MCF 10A (cell line): ENCODE measurements at regions of chr4 and their contacts with region 1.

Region 1: DNA sequence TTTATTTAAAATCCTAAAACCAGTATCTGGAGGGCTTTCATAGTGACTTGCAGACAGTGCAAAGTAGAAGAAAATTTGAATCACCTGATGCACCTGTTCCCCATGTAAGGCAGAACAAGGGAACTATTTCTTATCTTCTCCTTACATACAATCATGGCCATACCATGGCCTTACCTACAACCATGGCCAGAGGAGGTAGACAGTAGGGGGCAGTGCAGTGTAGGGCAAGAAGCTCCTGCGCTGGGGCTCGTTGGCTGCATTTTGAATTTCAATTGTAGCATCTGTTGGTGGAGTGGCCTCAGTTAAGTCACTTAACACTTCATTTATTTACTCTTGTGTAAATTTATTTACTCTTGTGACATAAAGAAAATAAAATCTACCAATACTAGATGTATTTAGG is 33.0 kb downstream of the GALNTL6 start:
- DNase-seq: peak; percentile 60
- H3K4me3 Mint-ChIP-seq: no peak overlapping the region
- H3K27ac Mint-ChIP-seq: no peak overlapping the region
- H3K4me1 Mint-ChIP-seq: no peaks in the 10 kb centered on the region
- H3K27me3 Mint-ChIP-seq: peaks cover 66% of the 10 kb centered on the region
- CTCF ChIP-seq: peak; percentile 71

Region 2: GRCh38 chr4:171896426-171896825 is 50.2 kb after region 1 on chr4:
- CTCF ChIA-PET with region 1: no interaction called
- POLR2A ChIA-PET with region 1: no interaction called
- intact Hi-C with region 1: no loop called
- DNase-seq: no peak
- H3K4me3 Mint-ChIP-seq: no peak overlapping the region
- H3K27ac Mint-ChIP-seq: no peak overlapping the region
- H3K4me1 Mint-ChIP-seq: no peaks in the 10 kb centered on the region
- H3K27me3 Mint-ChIP-seq: peaks cover 2% of the 10 kb centered on the region
- CTCF ChIP-seq: no peak

Region 3: DNA sequence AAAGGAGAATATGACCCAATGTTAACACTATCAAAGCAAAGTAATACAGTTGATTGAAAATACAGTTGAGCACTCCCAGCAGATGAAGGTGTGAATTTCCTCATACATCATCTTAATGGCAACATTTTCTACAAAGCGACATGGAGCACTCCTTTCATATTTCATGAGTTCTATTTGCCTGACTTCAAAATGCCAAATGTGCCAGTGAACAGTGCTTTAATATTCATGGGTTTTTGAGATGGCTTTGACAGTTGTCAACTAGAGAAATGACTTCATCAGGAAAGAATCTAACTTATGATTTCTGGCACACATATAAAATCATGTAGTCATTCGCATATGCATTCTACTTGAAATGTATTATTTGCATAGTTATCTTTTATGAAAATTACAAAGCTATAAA is 189.3 kb after region 1 on chr4:
- CTCF ChIA-PET with region 1: no interaction called
- POLR2A ChIA-PET with region 1: no interaction called
- intact Hi-C with region 1: loop called (anchors 5 kb)
- DNase-seq: no peak
- H3K4me3 Mint-ChIP-seq: no peak overlapping the region
- H3K27ac Mint-ChIP-seq: no peak overlapping the region
- H3K4me1 Mint-ChIP-seq: no peaks in the 10 kb centered on the region
- H3K27me3 Mint-ChIP-seq: no peaks in the 10 kb centered on the region
- CTCF ChIP-seq: no peak

Region 4: DNA sequence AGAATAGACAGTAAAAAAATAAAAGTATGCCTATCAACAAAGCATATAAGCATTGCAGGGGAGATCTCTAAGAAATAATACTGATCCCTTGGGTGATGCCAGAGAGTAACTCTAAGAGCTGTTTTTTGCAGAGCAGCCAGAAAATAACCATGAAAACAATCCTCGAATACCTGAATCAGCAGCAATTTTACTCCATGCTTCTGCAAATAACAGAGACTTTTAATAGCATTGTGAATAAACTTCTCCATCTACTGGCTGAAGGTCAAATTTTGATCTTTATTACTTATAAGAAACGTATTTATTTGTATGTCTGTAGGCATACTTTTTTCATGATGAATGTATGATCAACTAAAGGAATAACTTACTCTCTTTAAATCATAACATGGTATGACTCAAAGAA is 301.5 kb after region 1 on chr4:
- CTCF ChIA-PET with region 1: interaction called, 5 read pairs
- POLR2A ChIA-PET with region 1: no interaction called
- intact Hi-C with region 1: loop called (anchors 1 kb)
- DNase-seq: no peak
- H3K4me3 Mint-ChIP-seq: no peak overlapping the region
- H3K27ac Mint-ChIP-seq: no peak overlapping the region
- H3K4me1 Mint-ChIP-seq: no peaks in the 10 kb centered on the region
- H3K27me3 Mint-ChIP-seq: peaks cover 83% of the 10 kb centered on the region
- CTCF ChIP-seq: no peak

Region 5: DNA sequence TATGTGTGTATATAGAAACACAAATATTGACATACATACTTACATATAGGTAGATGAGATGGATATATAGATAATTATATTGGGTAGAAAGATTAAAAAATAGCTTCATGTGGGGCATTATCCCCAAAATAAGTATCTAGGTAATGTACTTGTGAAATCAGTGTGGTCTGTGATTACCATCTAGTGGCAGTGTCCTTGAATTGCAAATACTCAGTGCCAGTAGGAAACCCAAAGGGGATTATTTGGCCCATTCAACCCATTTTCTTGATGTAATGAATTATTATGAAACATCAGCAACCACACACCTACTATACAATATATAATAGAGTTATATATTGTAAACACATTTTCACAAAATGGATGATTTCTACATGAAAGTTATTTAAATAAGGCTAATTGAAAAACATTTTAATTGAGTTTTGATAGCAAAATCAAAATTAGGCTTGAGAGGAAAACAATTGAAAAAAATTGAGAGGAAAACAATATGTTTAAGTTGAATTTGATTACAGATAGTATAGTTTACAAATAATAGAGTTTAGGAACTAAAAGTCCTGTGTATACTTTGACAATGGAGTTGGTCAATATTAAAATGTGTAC is 356.3 kb after region 1 on chr4:
- CTCF ChIA-PET with region 1: interaction called, 7 read pairs
- POLR2A ChIA-PET with region 1: no interaction called
- intact Hi-C with region 1: loop called (anchors 2 kb)
- DNase-seq: peak; percentile 38
- H3K4me3 Mint-ChIP-seq: no peak overlapping the region
- H3K27ac Mint-ChIP-seq: no peak overlapping the region
- H3K4me1 Mint-ChIP-seq: no peaks in the 10 kb centered on the region
- H3K27me3 Mint-ChIP-seq: peaks cover 50% of the 10 kb centered on the region
- CTCF ChIP-seq: peak; percentile 74

Region 6: GRCh38 chr4:172830295-172830764 is 984.1 kb after region 1 on chr4:
- CTCF ChIA-PET with region 1: interaction called, 3 read pairs
- POLR2A ChIA-PET with region 1: no interaction called
- intact Hi-C with region 1: loop called (anchors 1 kb)
- DNase-seq: peak; percentile 23
- H3K4me3 Mint-ChIP-seq: no peak overlapping the region
- H3K27ac Mint-ChIP-seq: no peak overlapping the region
- H3K4me1 Mint-ChIP-seq: no peaks in the 10 kb centered on the region
- H3K27me3 Mint-ChIP-seq: peaks cover 58% of the 10 kb centered on the region
- CTCF ChIP-seq: peak; percentile 28